ENCODE measurements at regions of chr10 and their contacts with region 1.

Region 1: DNA sequence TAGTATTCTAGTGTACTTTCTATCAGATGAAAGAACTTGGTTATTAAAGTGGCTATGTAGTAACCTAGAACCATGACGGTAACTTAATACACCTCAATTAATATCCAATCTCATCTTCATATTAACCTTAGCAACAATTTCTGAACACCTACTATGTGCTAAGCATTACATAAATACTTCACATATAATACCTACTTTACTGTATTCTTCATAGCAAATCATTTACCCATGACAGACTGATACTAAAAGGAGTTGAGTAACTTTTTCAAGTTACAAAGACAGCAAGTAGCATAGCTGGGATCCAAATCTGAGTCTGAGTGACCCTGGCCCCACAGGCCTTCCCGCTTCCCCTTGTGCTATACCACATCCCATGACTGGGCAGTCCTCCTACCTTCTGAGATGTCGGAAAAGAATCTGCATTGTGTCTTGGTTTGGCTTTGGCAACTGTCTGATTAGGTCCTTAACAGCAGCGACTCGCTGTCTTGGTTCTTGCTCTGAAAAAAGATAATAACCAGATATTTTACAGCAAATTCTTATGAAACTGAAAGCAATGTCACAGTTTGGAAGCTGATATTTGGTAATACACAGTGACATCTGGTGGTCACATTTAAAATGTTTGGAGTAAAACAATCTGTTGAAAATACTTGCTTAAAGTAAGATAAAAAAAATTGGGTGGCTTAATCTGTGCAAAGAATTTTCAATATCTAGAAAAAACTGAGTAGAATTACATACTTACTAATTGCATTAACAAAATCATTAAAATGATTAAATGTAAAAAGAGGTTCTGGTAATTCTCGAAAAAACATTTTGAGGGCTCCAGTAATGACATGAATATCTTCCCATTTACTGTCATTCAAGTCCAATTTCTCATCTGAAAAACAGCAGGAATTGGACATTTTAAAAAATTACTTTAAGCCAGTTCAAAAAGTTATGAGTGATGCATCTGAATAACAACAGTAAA is 120.1 kb downstream of the ARHGAP12 start:
- DNase-seq: peak; percentile 24
- H3K4me3 Mint-ChIP-seq: peak overlapping the region; percentile 57
- H3K27ac Mint-ChIP-seq: peak overlapping the region; percentile 77
- H3K4me1 Mint-ChIP-seq: peaks cover 6% of the 10 kb centered on the region
- H3K27me3 Mint-ChIP-seq: no peaks in the 10 kb centered on the region

Region 2: DNA sequence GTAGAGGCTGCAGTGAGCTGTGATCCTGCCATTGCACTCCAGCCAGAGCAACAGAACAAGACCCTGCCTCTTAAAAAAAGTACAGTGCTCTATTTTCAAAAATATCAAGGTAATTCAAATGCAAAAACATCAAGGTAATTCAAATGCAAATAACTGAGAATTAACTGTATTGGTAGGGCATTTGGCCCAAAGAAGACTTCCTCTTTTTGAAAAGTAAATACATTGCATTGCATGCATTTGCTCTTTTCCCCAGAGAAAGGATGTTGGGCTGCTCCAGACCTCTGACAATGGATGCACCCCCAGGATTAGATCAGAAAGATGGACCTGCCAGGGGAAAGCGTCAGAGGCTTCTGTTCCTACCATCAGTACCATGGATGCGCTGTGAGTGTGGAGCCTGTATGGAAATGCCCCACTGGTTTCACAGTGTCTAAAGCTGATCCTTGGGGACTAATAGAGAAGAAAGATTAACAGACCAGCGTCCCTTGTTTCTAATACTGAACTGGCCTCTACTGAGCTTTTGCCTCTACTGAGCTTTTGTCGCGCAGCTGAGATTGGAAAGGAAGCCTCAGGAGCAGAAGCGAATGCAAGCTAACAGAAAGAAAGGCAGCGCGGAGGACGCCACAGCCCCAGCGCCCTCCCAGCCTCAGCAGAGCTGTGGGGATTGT is 1085.5 kb before region 1 on chr10:
- CTCF ChIA-PET with region 1: interaction called, 3 read pairs
- intact Hi-C with region 1: loop called (anchors 1 kb)
- DNase-seq: no peak
- H3K4me3 Mint-ChIP-seq: no peak overlapping the region
- H3K27ac Mint-ChIP-seq: no peak overlapping the region
- H3K4me1 Mint-ChIP-seq: no peaks in the 10 kb centered on the region
- H3K27me3 Mint-ChIP-seq: no peaks in the 10 kb centered on the region

Region 3: DNA sequence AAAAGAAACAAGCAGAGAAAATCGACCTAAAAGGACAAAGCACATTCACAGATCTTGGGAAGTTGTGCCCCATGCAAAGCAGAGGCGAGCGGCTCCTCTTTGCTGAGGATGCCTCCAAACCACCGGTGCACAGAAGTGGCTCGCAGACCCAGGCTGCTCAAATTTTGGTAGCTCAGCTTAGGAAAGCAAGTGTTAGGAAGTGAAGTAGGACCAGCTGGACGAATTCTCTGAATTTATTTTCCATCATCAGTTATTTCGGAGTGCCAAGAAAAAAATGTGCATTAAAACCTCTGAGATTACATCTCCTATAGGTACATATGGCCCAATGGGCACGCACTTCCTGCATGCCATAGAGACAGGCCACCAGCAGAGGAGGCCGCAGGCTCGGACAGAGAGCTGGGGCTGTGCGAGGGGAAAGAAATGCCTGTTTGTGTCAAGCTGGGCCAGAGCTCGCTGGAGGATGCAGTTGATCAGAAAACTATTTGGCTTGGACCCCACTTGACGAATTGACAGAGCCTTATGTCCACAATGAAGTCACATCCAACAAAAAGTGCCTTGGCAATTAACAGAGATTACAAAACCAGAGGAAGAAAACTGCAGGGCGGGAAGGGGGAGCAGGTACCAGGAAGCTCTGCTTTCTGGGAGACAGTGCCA is 1056.7 kb before region 1 on chr10:
- CTCF ChIA-PET with region 1: interaction called, 4 read pairs
- intact Hi-C with region 1: loop called (anchors 1 kb)
- DNase-seq: peak; percentile 78
- H3K4me3 Mint-ChIP-seq: no peak overlapping the region
- H3K27ac Mint-ChIP-seq: no peak overlapping the region
- H3K4me1 Mint-ChIP-seq: peaks cover 15% of the 10 kb centered on the region
- H3K27me3 Mint-ChIP-seq: no peaks in the 10 kb centered on the region

Measured in activated naive CD4-positive, alpha-beta T cell treated with anti-CD3 and anti-CD28 coated beads for 36 hours (primary cell).